Natural killer cell (primary cell): ENCODE measurements at regions of chr15 and their contacts with region 1.

Region 1: GRCh38 chr15:25422021-25422420 is 16.8 kb downstream of the UBE3A start:
- DNase-seq: no peak
- ATAC-seq: no peak
- H3K4me3 ChIP-seq: no peak overlapping the region
- H3K4me3 Mint-ChIP-seq: no peak overlapping the region
- H3K27ac ChIP-seq: no peak overlapping the region
- H3K27ac Mint-ChIP-seq: peak overlapping the region in 1 of 2 donors; percentile 41
- H3K4me1 ChIP-seq: peaks cover 5% of the 10 kb centered on the region
- H3K4me1 Mint-ChIP-seq: peaks cover 43 to 68% of the 10 kb centered on the region in 2 donors
- H3K27me3 ChIP-seq: no peaks in the 10 kb centered on the region
- H3K27me3 Mint-ChIP-seq: no peaks in the 10 kb centered on the region
- CTCF ChIP-seq: no peak

Region 2: GRCh38 chr15:25372298-25372697 is 49.7 kb before region 1 on chr15:
- intact Hi-C with region 1: loop called (anchors 10 kb)
- DNase-seq: no peak
- ATAC-seq: no peak
- H3K4me3 ChIP-seq: no peak overlapping the region
- H3K4me3 Mint-ChIP-seq: no peak overlapping the region
- H3K27ac ChIP-seq: no peak overlapping the region
- H3K27ac Mint-ChIP-seq: peak overlapping the region in 1 of 2 donors; percentile 12
- H3K4me1 ChIP-seq: no peaks in the 10 kb centered on the region
- H3K4me1 Mint-ChIP-seq: peaks cover 11 to 20% of the 10 kb centered on the region in 2 donors
- H3K27me3 ChIP-seq: no peaks in the 10 kb centered on the region
- H3K27me3 Mint-ChIP-seq: no peaks in the 10 kb centered on the region
- CTCF ChIP-seq: no peak